PC-9 (cell line): ENCODE measurements at regions of chr7 and their contacts with region 1.

Region 1: DNA sequence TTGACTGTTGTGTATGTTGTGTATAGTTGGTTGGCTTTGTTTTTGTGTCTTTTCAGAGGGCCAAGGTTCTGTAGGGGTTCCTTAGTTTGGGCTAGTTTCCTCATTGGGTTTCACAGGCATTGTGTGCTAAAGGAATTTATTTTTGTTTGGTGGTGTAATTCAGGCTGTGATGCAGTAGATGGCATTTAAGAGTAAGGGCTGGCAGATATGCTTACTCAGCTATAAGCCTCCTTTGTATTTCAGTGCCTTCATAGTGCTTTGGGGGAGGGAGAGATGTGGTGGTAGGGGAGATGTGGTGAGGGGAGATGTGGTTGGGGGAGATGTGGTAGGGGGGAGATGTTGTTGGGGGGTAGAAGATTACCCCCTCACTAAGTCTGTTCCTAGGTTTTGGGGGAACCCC is 91.7 kb downstream of the SLC25A40 start:
- DNase-seq: no peak
- H3K4me3 ChIP-seq: no peak overlapping the region
- H3K27ac ChIP-seq: no peak overlapping the region
- H3K4me1 ChIP-seq: no peaks in the 10 kb centered on the region
- H3K27me3 ChIP-seq: no peaks in the 10 kb centered on the region
- CTCF ChIP-seq: no peak; the same call in 1 of the 2 replicates

Region 2: DNA sequence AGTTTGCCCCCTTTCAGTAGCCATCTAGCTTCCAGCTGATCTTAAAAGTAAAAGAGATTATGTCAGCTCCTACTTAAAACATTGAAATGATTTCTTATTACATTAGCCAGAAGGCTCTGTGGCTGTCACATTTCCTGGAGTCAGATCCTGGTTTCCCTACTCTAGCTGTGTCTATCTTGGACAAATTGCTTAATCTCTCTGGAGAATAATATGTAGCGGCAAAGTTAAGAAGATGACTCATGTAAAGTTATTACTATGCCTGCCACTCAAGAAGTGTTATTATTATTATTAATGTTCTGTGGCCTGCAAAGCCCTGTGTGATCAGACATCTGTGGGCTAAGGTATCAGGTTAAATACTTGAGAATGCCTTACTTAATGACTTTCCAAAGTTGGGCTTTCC is 49.1 kb before region 1 on chr7:
- CTCF ChIA-PET with region 1: no interaction called
- POLR2A ChIA-PET with region 1: no interaction called
- intact Hi-C with region 1: loop called (anchors 5 kb)
- DNase-seq: no peak
- H3K4me3 ChIP-seq: no peak overlapping the region
- H3K27ac ChIP-seq: no peak overlapping the region
- H3K4me1 ChIP-seq: no peaks in the 10 kb centered on the region; the same call in 1 of the 2 replicates
- H3K27me3 ChIP-seq: no peaks in the 10 kb centered on the region
- CTCF ChIP-seq: no peak

Region 3: DNA sequence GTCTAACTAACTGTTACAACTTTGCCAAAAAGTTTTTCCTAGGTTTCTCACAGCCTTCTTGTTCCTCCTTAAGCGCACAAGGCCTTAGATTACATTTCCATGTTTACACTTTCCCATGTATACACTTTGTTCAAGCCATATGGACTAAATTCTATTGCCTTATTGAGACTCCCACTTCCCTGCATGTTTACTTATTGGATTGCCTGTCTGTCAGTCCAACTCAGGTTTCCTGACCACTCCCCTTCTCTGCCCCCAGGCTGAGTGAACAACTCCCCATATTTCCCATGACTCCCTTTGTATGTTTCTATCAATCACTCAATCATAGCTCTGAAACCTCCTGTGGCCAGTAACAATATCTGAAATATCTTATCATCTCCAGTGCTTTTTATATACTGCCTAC is 48.7 kb after region 1 on chr7:
- CTCF ChIA-PET with region 1: no interaction called
- POLR2A ChIA-PET with region 1: no interaction called
- intact Hi-C with region 1: no loop called
- DNase-seq: no peak
- H3K4me3 ChIP-seq: no peak overlapping the region
- H3K27ac ChIP-seq: no peak overlapping the region
- H3K4me1 ChIP-seq: no peaks in the 10 kb centered on the region
- H3K27me3 ChIP-seq: no peaks in the 10 kb centered on the region
- CTCF ChIP-seq: no peak